Activated CD8-positive, alpha-beta T cell treated with anti-CD3 and anti-CD28 coated beads, Interleukin-2, amount 10 ng/mL, durations not matched to agents 7 days and 5 days (primary cell): ENCODE measurements at regions of chr4 and their contacts with region 1.

Region 1: GRCh38 chr4:15956179-15956850 is 6.7 kb downstream of the FGFBP2 start:
- DNase-seq: peak; percentile 90
- ATAC-seq: peak; percentile 91
- H3K4me3 Mint-ChIP-seq: no peak overlapping the region
- H3K27ac Mint-ChIP-seq: no peak overlapping the region
- H3K4me1 Mint-ChIP-seq: peaks cover 11% of the 10 kb centered on the region
- H3K27me3 Mint-ChIP-seq: peaks cover 6% of the 10 kb centered on the region

Region 2: GRCh38 chr4:15479089-15479912 is 477.0 kb before region 1 on chr4:
- CTCF ChIA-PET with region 1: interaction called, 10 read pairs
- POLR2A ChIA-PET with region 1: no interaction called
- DNase-seq: no peak
- ATAC-seq: peak; percentile 47
- H3K4me3 Mint-ChIP-seq: no peak overlapping the region
- H3K27ac Mint-ChIP-seq: no peak overlapping the region
- H3K4me1 Mint-ChIP-seq: no peaks in the 10 kb centered on the region
- H3K27me3 Mint-ChIP-seq: no peaks in the 10 kb centered on the region

Region 3: GRCh38 chr4:15805583-15806517 is 150.5 kb before region 1 on chr4:
- CTCF ChIA-PET with region 1: interaction called, 25 read pairs
- POLR2A ChIA-PET with region 1: no interaction called
- DNase-seq: peak; percentile 63
- ATAC-seq: peak; percentile 64
- H3K4me3 Mint-ChIP-seq: no peak overlapping the region
- H3K27ac Mint-ChIP-seq: peak overlapping the region; percentile 21
- H3K4me1 Mint-ChIP-seq: peaks cover 65% of the 10 kb centered on the region
- H3K27me3 Mint-ChIP-seq: no peaks in the 10 kb centered on the region

Region 4: DNA sequence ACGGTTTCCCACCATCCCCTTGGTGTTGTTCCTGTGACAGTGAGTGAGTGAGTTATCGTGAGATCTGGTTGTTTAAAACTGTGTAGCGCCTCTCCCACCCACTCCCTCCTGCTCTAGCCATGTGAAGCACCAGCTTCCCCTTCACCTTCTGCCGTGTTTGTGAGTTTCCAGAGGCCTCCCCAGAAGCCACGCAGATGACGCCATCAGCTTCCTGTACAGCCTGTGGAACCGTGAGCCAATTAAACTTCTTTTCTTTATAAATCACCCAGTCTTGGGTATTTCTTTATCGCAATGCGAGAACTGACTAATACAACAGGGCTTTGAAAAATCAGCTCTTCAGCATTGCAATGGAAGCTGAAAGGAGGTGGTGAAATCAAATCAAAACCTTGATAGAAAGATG is 67.8 kb before region 1 on chr4:
- CTCF ChIA-PET with region 1: interaction called, 158 read pairs
- POLR2A ChIA-PET with region 1: no interaction called
- DNase-seq: no peak
- ATAC-seq: no peak
- H3K4me3 Mint-ChIP-seq: no peak overlapping the region
- H3K27ac Mint-ChIP-seq: no peak overlapping the region
- H3K4me1 Mint-ChIP-seq: no peaks in the 10 kb centered on the region
- H3K27me3 Mint-ChIP-seq: peaks cover 14% of the 10 kb centered on the region

Region 5: GRCh38 chr4:15938182-15938581 is 18.1 kb before region 1 on chr4:
- CTCF ChIA-PET with region 1: interaction called, 10 read pairs
- POLR2A ChIA-PET with region 1: no interaction called
- DNase-seq: no peak
- ATAC-seq: no peak
- H3K4me3 Mint-ChIP-seq: no peak overlapping the region
- H3K27ac Mint-ChIP-seq: no peak overlapping the region
- H3K4me1 Mint-ChIP-seq: peaks cover 4% of the 10 kb centered on the region
- H3K27me3 Mint-ChIP-seq: peaks cover 20% of the 10 kb centered on the region

Region 6: GRCh38 chr4:16001484-16001858 is 45.2 kb after region 1 on chr4:
- CTCF ChIA-PET with region 1: interaction called, 63 read pairs
- POLR2A ChIA-PET with region 1: no interaction called
- DNase-seq: peak; percentile 71
- ATAC-seq: peak; percentile 91
- H3K4me3 Mint-ChIP-seq: no peak overlapping the region
- H3K27ac Mint-ChIP-seq: no peak overlapping the region
- H3K4me1 Mint-ChIP-seq: no peaks in the 10 kb centered on the region
- H3K27me3 Mint-ChIP-seq: peaks cover 13% of the 10 kb centered on the region